ENCODE measurements at regions of chr16 and their contacts with region 1.

Region 1: GRCh38 chr16:56356276-56357240 is 68.8 kb downstream of the AMFR start:
- DNase-seq: peak; percentile 87
- ATAC-seq: peak; percentile 93
- H3K4me3 Mint-ChIP-seq: peak overlapping the region; percentile 59
- H3K27ac Mint-ChIP-seq: peak overlapping the region; percentile 94
- H3K4me1 Mint-ChIP-seq: peaks cover 35% of the 10 kb centered on the region
- H3K27me3 Mint-ChIP-seq: no peaks in the 10 kb centered on the region
- CTCF ChIP-seq: peak; percentile 54

Region 2: GRCh38 chr16:55944377-55944802 is 412.2 kb before region 1 on chr16:
- CTCF ChIA-PET with region 1: interaction called, 13 read pairs
- POLR2A ChIA-PET with region 1: no interaction called
- DNase-seq: peak; percentile 80
- ATAC-seq: peak; percentile 97
- H3K4me3 Mint-ChIP-seq: no peak overlapping the region
- H3K27ac Mint-ChIP-seq: no peak overlapping the region
- H3K4me1 Mint-ChIP-seq: peaks cover 22% of the 10 kb centered on the region
- H3K27me3 Mint-ChIP-seq: no peaks in the 10 kb centered on the region; the same call in none of the 2 replicates
- CTCF ChIP-seq: peak; percentile 88

Region 3: GRCh38 chr16:56311208-56312027 is 45.1 kb before region 1 on chr16:
- CTCF ChIA-PET with region 1: interaction called, 18 read pairs
- POLR2A ChIA-PET with region 1: no interaction called
- DNase-seq: peak; percentile 37
- ATAC-seq: peak; percentile 93
- H3K4me3 Mint-ChIP-seq: no peak overlapping the region
- H3K27ac Mint-ChIP-seq: no peak overlapping the region
- H3K4me1 Mint-ChIP-seq: peaks cover 2% of the 10 kb centered on the region; the same call in 1 of the 2 replicates
- H3K27me3 Mint-ChIP-seq: no peaks in the 10 kb centered on the region
- CTCF ChIP-seq: no peak

Region 4: GRCh38 chr16:56327071-56327928 is 29.3 kb before region 1 on chr16:
- CTCF ChIA-PET with region 1: interaction called, 65 read pairs
- POLR2A ChIA-PET with region 1: no interaction called
- DNase-seq: no peak
- ATAC-seq: no peak
- H3K4me3 Mint-ChIP-seq: no peak overlapping the region
- H3K27ac Mint-ChIP-seq: no peak overlapping the region
- H3K4me1 Mint-ChIP-seq: no peaks in the 10 kb centered on the region
- H3K27me3 Mint-ChIP-seq: no peaks in the 10 kb centered on the region
- CTCF ChIP-seq: no peak

Region 5: DNA sequence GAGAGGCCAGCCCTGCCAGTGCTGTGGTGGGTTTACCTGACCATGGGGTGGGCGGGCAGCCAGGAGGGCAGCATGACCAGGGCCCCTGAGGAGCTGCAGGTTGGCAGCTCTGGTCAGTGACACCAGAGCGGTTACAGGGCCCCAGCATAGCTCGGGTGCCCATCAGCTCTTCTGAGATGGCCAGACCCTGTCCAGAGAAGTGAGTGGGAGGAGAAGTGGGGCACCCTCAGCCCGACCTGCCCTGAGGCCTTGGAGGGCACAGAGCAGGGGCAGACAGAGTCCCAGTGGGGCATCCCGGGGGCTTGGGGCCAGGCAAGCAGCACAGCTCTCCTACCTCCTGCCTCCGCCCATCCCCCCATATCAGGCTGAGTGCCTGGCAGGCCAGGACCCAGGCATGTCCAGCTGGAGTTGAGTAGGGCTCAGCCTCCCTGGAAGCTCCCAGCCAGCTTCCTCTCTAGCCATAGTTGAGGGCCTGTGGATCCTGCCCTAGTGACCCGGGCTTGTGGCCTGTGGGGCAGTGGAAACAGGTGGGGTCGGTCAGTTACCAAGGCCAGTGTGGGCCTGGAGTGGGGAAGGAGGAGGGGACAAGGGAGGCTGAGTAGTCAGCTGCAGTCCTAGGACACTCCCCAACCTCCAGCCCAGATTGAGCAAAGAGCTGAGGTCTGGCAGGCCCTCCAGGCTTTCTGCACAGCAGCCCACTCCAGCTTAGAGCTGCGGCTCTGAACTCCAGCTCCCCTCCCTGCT is 14.7 kb before region 1 on chr16:
- CTCF ChIA-PET with region 1: interaction called, 65 read pairs
- POLR2A ChIA-PET with region 1: no interaction called
- DNase-seq: no peak
- ATAC-seq: no peak
- H3K4me3 Mint-ChIP-seq: no peak overlapping the region
- H3K27ac Mint-ChIP-seq: no peak overlapping the region
- H3K4me1 Mint-ChIP-seq: no peaks in the 10 kb centered on the region
- H3K27me3 Mint-ChIP-seq: no peaks in the 10 kb centered on the region
- CTCF ChIP-seq: no peak

Region 6: DNA sequence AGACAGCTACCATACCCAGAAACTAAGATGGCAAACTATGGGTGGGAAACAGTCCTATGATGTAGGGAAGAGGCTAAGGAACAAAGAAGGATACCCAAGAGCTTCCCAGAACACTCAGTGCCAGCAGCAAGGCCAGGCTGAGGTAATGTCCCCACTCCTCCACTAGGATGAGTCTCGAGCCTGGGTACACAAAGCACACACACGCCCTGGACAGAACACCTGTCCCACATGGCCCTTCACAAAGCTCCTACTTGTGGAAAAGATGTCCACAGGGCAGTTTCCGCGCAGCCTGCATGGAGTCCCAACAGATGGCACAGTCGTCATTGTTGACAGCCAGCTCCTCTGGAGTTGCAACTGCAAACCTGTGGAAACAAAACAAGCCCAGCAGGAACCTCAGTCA is 44.9 kb after region 1 on chr16:
- CTCF ChIA-PET with region 1: interaction called, 12 read pairs
- POLR2A ChIA-PET with region 1: no interaction called
- DNase-seq: peak; percentile 32
- ATAC-seq: peak; percentile 95
- H3K4me3 Mint-ChIP-seq: no peak overlapping the region
- H3K27ac Mint-ChIP-seq: no peak overlapping the region
- H3K4me1 Mint-ChIP-seq: no peaks in the 10 kb centered on the region
- H3K27me3 Mint-ChIP-seq: no peaks in the 10 kb centered on the region
- CTCF ChIP-seq: peak; percentile 39; the same call in 1 of the 2 replicates